ENCODE measurements at regions of chr1 and their contacts with region 1.

Region 1: DNA sequence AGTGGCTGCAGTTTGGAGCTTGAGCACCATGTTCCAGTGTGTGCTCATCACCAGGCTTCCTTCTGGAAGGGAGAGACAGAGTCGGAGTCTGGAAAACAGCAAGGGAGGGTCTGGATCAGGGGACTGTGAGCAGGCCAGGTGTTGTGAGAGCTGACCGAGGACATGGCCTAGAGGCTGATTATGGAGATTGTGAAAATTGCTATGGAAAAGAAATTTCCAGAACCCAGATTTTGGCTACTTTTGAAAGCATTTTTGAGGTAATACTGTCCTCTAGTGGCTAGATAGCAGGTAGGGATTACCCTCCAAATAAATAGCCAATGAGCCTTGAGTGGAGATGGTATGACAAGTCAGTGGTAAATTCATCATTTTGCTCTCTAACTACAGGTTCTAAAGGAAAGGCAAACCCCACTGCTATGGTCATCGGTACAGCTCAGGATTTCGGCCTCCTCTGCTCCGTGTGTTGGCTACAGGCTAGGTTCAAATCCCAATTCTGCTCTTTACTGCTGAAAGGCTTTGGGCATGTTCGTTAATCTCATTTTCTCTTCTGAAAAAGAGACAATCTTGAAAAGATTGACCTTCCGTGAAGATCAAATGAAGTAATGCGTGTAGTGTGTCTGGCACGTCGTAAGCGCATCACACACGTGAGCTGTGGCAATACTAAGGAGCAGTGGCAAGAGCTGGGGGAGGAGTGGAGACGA is 1.0 kb upstream of the HAO2 start:
- DNase-seq: peak; percentile 54
- H3K4me3 ChIP-seq: no peak overlapping the region
- H3K27ac ChIP-seq: no peak overlapping the region
- H3K4me1 ChIP-seq: peaks cover 7% of the 10 kb centered on the region
- H3K27me3 ChIP-seq: peaks cover 3% of the 10 kb centered on the region
- CTCF ChIP-seq: peak; percentile 83

Region 2: GRCh38 chr1:118077331-118078055 is 1290.1 kb before region 1 on chr1:
- CTCF ChIA-PET with region 1: no interaction called
- POLR2A ChIA-PET with region 1: no interaction called
- intact Hi-C with region 1: loop called (anchors 5 kb)
- DNase-seq: peak; percentile 37
- H3K4me3 ChIP-seq: no peak overlapping the region
- H3K27ac ChIP-seq: no peak overlapping the region
- H3K4me1 ChIP-seq: no peaks in the 10 kb centered on the region
- H3K27me3 ChIP-seq: no peaks in the 10 kb centered on the region
- CTCF ChIP-seq: peak; percentile 57

Region 3: DNA sequence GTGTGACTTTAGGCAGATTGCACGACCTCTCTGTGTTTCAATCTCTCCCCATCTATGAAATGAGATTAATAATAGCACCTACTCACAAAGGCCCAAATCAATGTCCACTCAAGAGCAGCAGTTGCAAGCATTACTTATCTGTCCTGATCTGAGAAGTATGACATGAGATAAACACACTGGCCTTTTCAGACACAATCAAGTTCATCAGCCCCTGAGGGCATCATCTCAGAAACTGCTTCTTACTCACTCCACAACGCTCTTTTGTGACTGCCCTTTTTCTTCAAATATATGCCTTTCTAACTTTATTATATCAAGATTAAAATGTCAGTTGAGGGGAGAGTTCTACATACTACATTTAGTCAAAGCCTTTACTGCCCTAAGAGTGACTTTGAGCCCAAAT is 810.7 kb before region 1 on chr1:
- CTCF ChIA-PET with region 1: no interaction called
- POLR2A ChIA-PET with region 1: no interaction called
- intact Hi-C with region 1: loop called (anchors 10 kb)
- DNase-seq: no peak
- H3K4me3 ChIP-seq: no peak overlapping the region
- H3K27ac ChIP-seq: no peak overlapping the region
- H3K4me1 ChIP-seq: no peaks in the 10 kb centered on the region
- H3K27me3 ChIP-seq: no peaks in the 10 kb centered on the region
- CTCF ChIP-seq: no peak

Region 4: GRCh38 chr1:119286587-119287181 is 80.9 kb before region 1 on chr1:
- CTCF ChIA-PET with region 1: no interaction called
- POLR2A ChIA-PET with region 1: no interaction called
- intact Hi-C with region 1: loop called (anchors 1 kb)
- DNase-seq: peak; percentile 71
- H3K4me3 ChIP-seq: no peak overlapping the region
- H3K27ac ChIP-seq: no peak overlapping the region
- H3K4me1 ChIP-seq: no peaks in the 10 kb centered on the region
- H3K27me3 ChIP-seq: no peaks in the 10 kb centered on the region
- CTCF ChIP-seq: peak; percentile 83

Measured in A673 (cell line).